Activated CD8-positive, alpha-beta T cell treated with anti-CD3 and anti-CD28 coated beads for 36 hours (primary cell): ENCODE measurements at regions of chr6 and their contacts with region 1.

Region 1: GRCh38 chr6:121334299-121335086 is at the start of gene TBC1D32:
- DNase-seq: peak; percentile 91
- ATAC-seq: peak; percentile 92
- H3K4me3 Mint-ChIP-seq: peak within 1 kb of the TSS; percentile 84
- H3K27ac Mint-ChIP-seq: peak within 1 kb of the TSS; percentile 96
- H3K4me1 Mint-ChIP-seq: peaks cover 32% of the 10 kb centered on the region
- H3K27me3 Mint-ChIP-seq: no peaks in the 10 kb centered on the region
- CTCF ChIP-seq: no peak
- total RNA-seq, gene TBC1D32: 8.1 to 10.4 TPM

Region 2: GRCh38 chr6:121319112-121319553 is 15.4 kb before region 1 on chr6:
- CTCF ChIA-PET with region 1: interaction called, 15 read pairs
- POLR2A ChIA-PET with region 1: interaction called, 3 read pairs
- intact Hi-C with region 1: no loop called
- DNase-seq: no peak
- ATAC-seq: no peak
- H3K4me3 Mint-ChIP-seq: no peak overlapping the region
- H3K27ac Mint-ChIP-seq: no peak overlapping the region
- H3K4me1 Mint-ChIP-seq: peaks cover 8% of the 10 kb centered on the region
- H3K27me3 Mint-ChIP-seq: no peaks in the 10 kb centered on the region
- CTCF ChIP-seq: peak; percentile 30